ENCODE measurements at regions of chr19 and their contacts with region 1.

Region 1: DNA sequence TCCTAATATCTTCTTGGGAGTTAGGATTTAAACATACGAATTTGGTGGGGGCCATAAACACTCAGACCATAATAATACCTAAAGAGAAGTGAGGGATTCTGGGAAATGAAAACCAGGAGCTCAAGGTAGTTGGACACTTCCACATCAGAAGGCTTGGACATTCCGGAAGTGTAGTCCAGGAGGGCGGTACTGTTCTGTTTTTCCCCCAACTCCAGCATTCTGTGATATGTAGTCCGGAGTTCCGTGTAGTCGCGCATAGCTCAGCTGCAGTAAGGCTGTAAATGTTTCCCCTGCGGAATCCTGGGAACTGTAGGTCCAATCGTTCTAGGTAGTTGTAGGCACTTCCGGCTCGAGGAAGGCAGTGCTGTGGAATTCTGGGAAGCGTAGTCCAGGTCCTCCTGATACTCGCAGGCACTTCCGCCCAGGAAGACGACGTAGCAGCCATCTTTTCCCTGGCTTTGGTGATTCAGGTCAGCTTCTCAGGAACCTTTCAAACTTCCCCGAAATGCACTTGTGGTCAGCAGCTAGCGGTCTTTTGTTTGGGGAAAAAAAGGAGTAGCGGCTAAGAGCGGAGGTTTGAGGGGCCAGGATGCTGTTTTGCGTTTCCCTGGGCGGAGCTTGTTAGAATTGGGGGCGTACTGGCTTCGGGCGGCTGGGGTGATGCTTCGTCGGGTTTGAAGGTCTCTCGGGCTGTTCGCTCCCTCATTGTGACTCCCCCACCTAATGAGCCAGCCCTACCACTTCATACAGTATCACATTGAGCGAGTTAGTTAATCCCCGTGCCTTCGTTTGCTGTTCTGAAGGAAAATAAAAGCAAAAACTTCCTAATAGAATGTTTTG is at the start of gene ZNF226:
- DNase-seq: peak; percentile 57
- ATAC-seq: peak; percentile 92
- H3K4me3 Mint-ChIP-seq: peak within 1 kb of the TSS; percentile 99
- H3K27ac Mint-ChIP-seq: peak within 1 kb of the TSS; percentile 97
- H3K4me1 Mint-ChIP-seq: peaks cover 31% of the 10 kb centered on the region
- H3K27me3 Mint-ChIP-seq: no peaks in the 10 kb centered on the region
- CTCF ChIP-seq: no peak
- total RNA-seq, gene ZNF226: 37.7 and 38.3 TPM in 2 replicates

Region 2: GRCh38 chr19:44071824-44072542 is 92.9 kb before region 1 on chr19 and contains the start of gene ZNF284:
- CTCF ChIA-PET with region 1: no interaction called
- POLR2A ChIA-PET with region 1: interaction called, 5 read pairs
- intact Hi-C with region 1: loop called (anchors 1 kb)
- DNase-seq: peak; percentile 67
- ATAC-seq: peak; percentile 100
- H3K4me3 Mint-ChIP-seq: peak within 1 kb of the TSS; percentile 94
- H3K27ac Mint-ChIP-seq: peak within 1 kb of the TSS; percentile 80
- H3K4me1 Mint-ChIP-seq: peaks cover 26% of the 10 kb centered on the region
- H3K27me3 Mint-ChIP-seq: peaks cover 1% of the 10 kb centered on the region
- CTCF ChIP-seq: no peak
- total RNA-seq, gene ZNF284: 2.1 and 2.3 TPM in 2 replicates

Region 3: GRCh38 chr19:44141191-44142058 is 23.5 kb before region 1 on chr19 and contains the start of gene ZNF234:
- CTCF ChIA-PET with region 1: interaction called, 3 read pairs
- POLR2A ChIA-PET with region 1: interaction called, 10 read pairs
- intact Hi-C with region 1: loop called (anchors 1 kb)
- DNase-seq: peak; percentile 58
- ATAC-seq: peak; percentile 93
- H3K4me3 Mint-ChIP-seq: peak within 1 kb of the TSS; percentile 98
- H3K27ac Mint-ChIP-seq: peak within 1 kb of the TSS; percentile 85
- H3K4me1 Mint-ChIP-seq: peaks cover 23% of the 10 kb centered on the region
- H3K27me3 Mint-ChIP-seq: no peaks in the 10 kb centered on the region
- CTCF ChIP-seq: no peak
- total RNA-seq, gene ZNF234: 14.8 and 18.8 TPM in 2 replicates

Region 4: DNA sequence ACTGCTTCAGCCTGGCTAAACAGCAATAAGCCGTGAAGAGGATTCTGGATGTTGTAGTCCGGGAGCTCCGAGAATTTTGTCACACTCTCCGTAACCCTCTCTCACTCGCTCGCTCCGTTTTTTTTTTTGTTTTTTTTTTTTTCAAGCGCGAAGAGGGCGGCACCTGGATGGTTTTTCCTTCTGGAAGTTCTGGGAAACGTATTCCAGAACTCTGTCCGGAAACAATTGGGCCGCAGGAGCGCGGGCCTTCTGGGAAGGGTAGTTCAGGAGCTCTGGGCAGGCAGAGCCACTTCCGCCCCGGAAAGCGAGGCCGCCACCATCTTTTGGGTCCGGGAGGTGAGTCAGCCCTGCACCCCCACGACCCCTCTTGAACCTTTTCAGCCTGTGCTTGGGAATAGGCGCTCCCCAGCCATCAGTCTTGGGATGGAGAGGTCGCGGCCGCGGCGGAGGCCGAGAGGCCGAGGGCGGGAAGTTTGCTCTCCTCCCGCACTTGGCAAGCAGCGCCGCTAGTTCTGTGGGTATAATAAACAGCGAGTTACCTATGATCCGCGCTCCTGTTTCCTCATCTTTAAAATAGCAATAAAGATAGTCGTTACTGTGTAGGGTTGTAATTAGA is 47.5 kb after region 1 on chr19 and contains the start of gene ZNF227:
- CTCF ChIA-PET with region 1: no interaction called
- POLR2A ChIA-PET with region 1: interaction called, 32 read pairs
- intact Hi-C with region 1: loop called (anchors 1 kb)
- DNase-seq: peak; percentile 69
- ATAC-seq: peak; percentile 93
- H3K4me3 Mint-ChIP-seq: peak within 1 kb of the TSS; percentile 95
- H3K27ac Mint-ChIP-seq: peak within 1 kb of the TSS; percentile 89
- H3K4me1 Mint-ChIP-seq: peaks cover 20% of the 10 kb centered on the region
- H3K27me3 Mint-ChIP-seq: no peaks in the 10 kb centered on the region
- CTCF ChIP-seq: no peak
- total RNA-seq, gene ZNF227: 33.1 and 36.9 TPM in 2 replicates

Region 5: GRCh38 chr19:44447916-44448674 is 283.2 kb after region 1 on chr19 and contains the start of gene ZNF229:
- CTCF ChIA-PET with region 1: no interaction called
- POLR2A ChIA-PET with region 1: no interaction called
- intact Hi-C with region 1: loop called (anchors 1 kb)
- DNase-seq: peak; percentile 69
- ATAC-seq: peak; percentile 99
- H3K4me3 Mint-ChIP-seq: peak within 1 kb of the TSS; percentile 87
- H3K27ac Mint-ChIP-seq: peak within 1 kb of the TSS; percentile 79
- H3K4me1 Mint-ChIP-seq: peaks cover 12% of the 10 kb centered on the region
- H3K27me3 Mint-ChIP-seq: peaks cover 21% of the 10 kb centered on the region
- CTCF ChIP-seq: no peak
- total RNA-seq, gene ZNF229: 3.1 and 3.7 TPM in 2 replicates